ENCODE measurements at regions of chr12 and their contacts with region 1.

Region 1: DNA sequence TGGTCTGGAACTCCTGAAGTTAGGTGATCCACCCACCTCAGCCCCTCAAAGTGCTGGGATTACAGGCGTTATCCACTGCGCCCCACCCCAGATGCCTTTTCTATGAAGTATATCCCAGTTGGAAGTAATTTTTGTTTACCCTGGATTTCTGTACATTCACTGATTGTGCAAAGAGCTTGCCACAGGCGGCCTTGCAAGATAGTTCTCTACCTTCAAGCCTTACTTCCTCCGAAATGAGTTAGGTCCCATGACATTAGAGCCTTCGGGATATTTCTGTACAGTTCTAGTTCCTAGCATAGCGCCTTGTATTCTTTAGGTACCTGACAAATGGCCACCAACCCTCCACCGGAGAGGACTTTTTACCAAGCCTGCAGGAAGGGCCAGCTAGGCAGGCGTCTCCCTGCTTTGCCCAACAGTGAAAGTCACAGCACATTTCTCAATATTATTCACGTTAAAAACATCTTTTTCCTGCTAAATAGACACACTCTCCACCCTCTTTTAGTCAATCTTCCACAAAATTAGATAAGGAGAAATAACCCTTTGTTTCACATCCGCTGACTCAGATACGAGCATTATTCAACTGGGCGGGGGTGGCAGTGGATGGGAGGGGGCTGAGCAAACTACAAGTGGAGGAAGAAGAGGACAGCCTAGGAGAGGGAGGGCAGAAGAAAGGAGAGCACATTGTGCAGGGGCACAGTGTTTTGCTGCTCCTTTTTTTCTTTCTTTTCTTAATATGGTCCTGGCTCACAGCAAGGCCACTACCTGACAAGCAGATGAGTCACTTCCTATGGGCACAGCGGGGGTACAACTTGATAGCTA is 40.0 kb upstream of the CAPRIN2 start:
- DNase-seq: no peak
- H3K4me3 ChIP-seq: peak overlapping the region; percentile 54 to 76 (median 61)
- H3K27ac ChIP-seq: peak overlapping the region; percentile 44 to 79 (median 66)
- H3K4me1 ChIP-seq: peaks cover 18 to 49% (median 22%) of the 10 kb centered on the region in 3 donors
- H3K27me3 ChIP-seq: peaks cover 0 to 19% (median 0%) of the 10 kb centered on the region in 4 donors
- CTCF ChIP-seq: no peak
- POLR2A ChIP-seq: no peak

Region 2: GRCh38 chr12:30546121-30546520 is 248.7 kb before region 1 on chr12:
- intact Hi-C with region 1: no loop called
- DNase-seq: no peak
- H3K4me3 ChIP-seq: no peak overlapping the region
- H3K27ac ChIP-seq: no peak overlapping the region
- H3K4me1 ChIP-seq: peaks cover 0 to 12% (median 0%) of the 10 kb centered on the region in 3 donors
- H3K27me3 ChIP-seq: peaks cover 0 to 11% (median 0%) of the 10 kb centered on the region in 4 donors
- CTCF ChIP-seq: peak in 1 of 6 experiments; percentile 3
- POLR2A ChIP-seq: no peak

Region 3: GRCh38 chr12:30706476-30706875 is 88.3 kb before region 1 on chr12:
- intact Hi-C with region 1: no loop called
- DNase-seq: no peak
- H3K4me3 ChIP-seq: no peak overlapping the region
- H3K27ac ChIP-seq: no peak overlapping the region
- H3K4me1 ChIP-seq: peaks cover 0 to 38% (median 3%) of the 10 kb centered on the region in 3 donors
- H3K27me3 ChIP-seq: no peaks in the 10 kb centered on the region
- CTCF ChIP-seq: no peak
- POLR2A ChIP-seq: no peak

Region 4: GRCh38 chr12:30754709-30755394 is 39.9 kb before region 1 on chr12 and contains the start of gene CAPRIN2:
- intact Hi-C with region 1: loop called (anchors 5 kb)
- DNase-seq: peak; percentile 85
- H3K4me3 ChIP-seq: peak within 1 kb of the TSS; percentile 61 to 98 (median 82)
- H3K27ac ChIP-seq: peak within 1 kb of the TSS; percentile 87 to 95 (median 93)
- H3K4me1 ChIP-seq: peaks cover 8 to 25% (median 15%) of the 10 kb centered on the region in 3 donors
- H3K27me3 ChIP-seq: no peaks in the 10 kb centered on the region
- CTCF ChIP-seq: peak; percentile 20 to 57 (median 46)
- POLR2A ChIP-seq: peak in 3 of 4 donors; percentile 9 to 83 (median 80)
- total RNA-seq, gene CAPRIN2: 2.5 to 26.5 (median 15.2) TPM